ENCODE measurements at regions of chr3 and their contacts with region 1.

Region 1: DNA sequence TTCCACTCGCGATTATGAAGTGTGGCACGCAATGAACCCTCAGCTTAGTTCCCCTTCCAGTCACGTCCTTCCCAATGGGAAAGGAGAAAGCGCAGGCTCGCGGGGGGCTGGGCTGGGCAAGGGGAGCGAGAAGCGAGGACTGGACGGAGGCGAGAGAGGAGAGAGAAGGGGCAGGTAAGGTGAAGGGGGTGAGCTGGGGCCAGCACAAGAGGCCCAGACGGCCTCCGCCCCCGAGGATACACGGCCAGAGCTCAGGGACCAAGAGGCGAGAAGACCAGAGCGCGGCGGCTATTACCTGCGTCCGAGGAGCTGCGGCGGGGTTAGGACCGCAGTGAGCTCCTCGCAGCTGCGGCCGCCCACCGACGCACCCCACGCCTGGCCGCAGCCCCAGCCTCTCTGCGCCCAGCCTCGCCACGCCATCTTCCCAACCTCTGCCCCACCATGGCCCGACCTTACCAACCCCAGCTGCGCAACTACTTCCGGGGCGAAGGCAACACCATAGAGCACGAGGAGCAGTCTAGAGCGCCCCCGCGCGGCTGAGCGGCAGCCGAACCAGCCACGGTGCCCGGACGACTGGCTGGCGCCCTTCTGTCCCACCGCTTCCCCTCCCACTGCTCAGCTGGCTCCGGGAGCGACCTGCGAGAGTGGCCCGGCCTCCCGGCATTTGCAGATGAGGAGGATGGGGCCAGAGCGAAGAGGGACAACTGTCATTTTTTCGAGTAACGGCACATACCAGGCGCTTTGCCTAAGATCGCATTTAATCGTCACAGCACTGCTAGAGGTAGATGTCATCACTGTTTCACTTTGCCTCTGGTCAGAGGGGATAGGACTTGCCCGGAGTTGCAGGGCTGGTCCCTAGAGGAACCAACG is at the start of gene PARL:
- H3K4me3 Mint-ChIP-seq: peak within 1 kb of the TSS; percentile 91
- H3K27ac Mint-ChIP-seq: peak within 1 kb of the TSS; percentile 94
- H3K4me1 Mint-ChIP-seq: peaks cover 41% of the 10 kb centered on the region
- H3K27me3 Mint-ChIP-seq: peaks cover 9% of the 10 kb centered on the region

Region 2: GRCh38 chr3:183825456-183826161 is 59.1 kb before region 1 on chr3 and contains the start of gene MAP6D1:
- intact Hi-C with region 1: loop called (anchors 10 kb)
- H3K4me3 Mint-ChIP-seq: peak within 1 kb of the TSS; percentile 74
- H3K27ac Mint-ChIP-seq: peak within 1 kb of the TSS; percentile 15
- H3K4me1 Mint-ChIP-seq: peaks cover 30% of the 10 kb centered on the region
- H3K27me3 Mint-ChIP-seq: peaks cover 15% of the 10 kb centered on the region

Region 3: DNA sequence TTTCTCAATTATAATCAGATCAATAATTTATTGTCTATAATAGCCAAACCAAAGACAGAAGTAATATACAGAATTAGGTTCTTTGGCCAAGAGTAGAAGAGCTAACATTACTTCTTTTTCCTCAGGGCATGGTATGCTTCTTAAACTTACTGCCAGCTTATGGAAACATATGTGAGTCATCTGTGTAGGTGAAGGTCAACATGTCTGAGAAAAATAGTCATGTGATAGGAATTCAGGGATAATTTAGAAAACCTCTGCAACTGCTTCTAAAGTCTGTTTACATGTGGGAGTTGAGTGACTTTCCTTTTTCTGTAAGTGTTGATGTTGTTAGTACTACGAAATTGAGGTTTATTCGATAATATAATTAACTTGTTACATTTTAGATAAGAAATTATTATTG is 40.1 kb before region 1 on chr3:
- intact Hi-C with region 1: loop called (anchors 5 kb)
- H3K4me3 Mint-ChIP-seq: no peak overlapping the region
- H3K27ac Mint-ChIP-seq: no peak overlapping the region
- H3K4me1 Mint-ChIP-seq: peaks cover 10% of the 10 kb centered on the region
- H3K27me3 Mint-ChIP-seq: no peaks in the 10 kb centered on the region

Region 4: GRCh38 chr3:183868796-183869195 is 15.9 kb before region 1 on chr3:
- intact Hi-C with region 1: loop called (anchors 1 kb)
- H3K4me3 Mint-ChIP-seq: no peak overlapping the region
- H3K27ac Mint-ChIP-seq: peak overlapping the region; percentile 82
- H3K4me1 Mint-ChIP-seq: peaks cover 44% of the 10 kb centered on the region
- H3K27me3 Mint-ChIP-seq: no peaks in the 10 kb centered on the region

Measured in dendritic cell treated with granulocyte-macrophage colony-stimulating factor and Interleukin-4, amounts not matched to agents 40 ng/mL and 50 ng/mL, for 4 days (primary cell).